CD4-positive, alpha-beta memory T cell (primary cell): ENCODE measurements at regions of chr20 and their contacts with region 1.

Region 1: DNA sequence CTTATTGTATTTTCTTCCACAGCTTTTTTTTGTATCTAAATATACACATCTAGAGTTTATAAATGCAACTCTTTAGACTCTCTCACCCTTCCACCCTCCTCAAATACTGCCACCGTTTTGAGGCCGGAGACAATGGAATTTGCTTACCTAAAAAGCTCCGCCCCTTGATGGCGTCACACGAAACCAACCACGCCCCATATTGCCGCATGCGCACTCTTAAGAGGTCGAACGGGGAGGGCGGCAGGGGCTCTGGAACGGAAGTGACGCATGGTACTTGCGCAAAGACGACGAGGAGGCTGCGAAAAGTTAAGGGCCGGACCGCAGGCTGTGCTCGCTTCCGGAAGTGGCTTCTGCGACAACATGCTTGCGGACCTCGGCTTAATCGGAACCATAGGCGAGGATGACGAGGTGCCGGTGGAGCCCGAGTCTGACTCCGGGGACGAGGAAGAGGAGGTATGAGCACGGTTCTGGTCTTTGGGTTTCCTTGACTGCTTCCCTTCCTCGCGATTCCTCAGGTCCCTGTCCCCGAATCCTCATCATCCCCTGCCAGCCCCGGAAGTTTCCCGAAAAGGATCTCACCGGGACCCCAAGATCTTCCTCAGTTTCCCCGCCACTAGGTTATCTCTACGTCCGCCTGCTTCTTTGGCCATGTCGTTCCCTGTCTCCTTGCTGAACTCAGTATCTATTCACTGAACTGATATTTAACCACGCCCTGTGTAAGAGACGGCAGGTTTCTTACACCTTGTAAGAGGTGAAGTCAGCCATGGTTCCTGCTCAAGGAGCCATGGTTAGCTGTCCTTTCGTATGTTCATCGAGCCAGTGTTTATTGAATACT is at the start of gene DDX27:
- DNase-seq: peak; percentile 97 to 98 (median 97)
- H3K4me3 ChIP-seq: peak within 1 kb of the TSS; percentile 83 to 87
- H3K4me3 Mint-ChIP-seq: peak within 1 kb of the TSS; percentile 90 to 100 (median 95)
- H3K27ac ChIP-seq: peak within 1 kb of the TSS; percentile 94
- H3K27ac Mint-ChIP-seq: peak within 1 kb of the TSS; percentile 85 to 100 (median 99)
- H3K4me1 ChIP-seq: peaks cover 30% of the 10 kb centered on the region
- H3K4me1 Mint-ChIP-seq: peaks cover 18 to 39% (median 26%) of the 10 kb centered on the region in 4 donors
- H3K27me3 ChIP-seq: no peaks in the 10 kb centered on the region
- H3K27me3 Mint-ChIP-seq: no peaks in the 10 kb centered on the region
- total RNA-seq, gene DDX27: 60.3 to 60.4 TPM

Region 2: DNA sequence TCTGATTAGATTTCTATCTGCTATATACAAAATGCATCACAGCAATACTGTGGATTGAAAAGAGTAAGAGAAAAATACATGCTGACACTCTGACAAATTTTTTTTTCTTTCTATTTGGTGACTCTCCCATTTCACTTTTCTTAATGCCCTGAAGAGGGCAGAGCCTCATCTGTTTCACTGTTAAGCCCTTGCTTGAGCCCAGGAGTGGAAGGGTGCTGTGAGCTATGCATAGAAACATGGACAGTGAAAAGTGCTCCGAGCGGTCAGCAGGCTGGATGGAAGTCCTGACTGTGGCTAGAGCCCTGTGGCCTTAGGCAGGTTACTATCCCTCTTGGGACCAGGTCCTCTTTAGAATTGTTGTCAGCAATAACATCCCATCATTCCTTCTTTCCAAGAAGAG is 190.6 kb before region 1 on chr20:
- CTCF ChIA-PET with region 1: interaction called, 3 read pairs
- POLR2A ChIA-PET with region 1: no interaction called
- intact Hi-C with region 1: loop called (anchors 2 kb)
- DNase-seq: no peak
- H3K4me3 ChIP-seq: no peak overlapping the region
- H3K4me3 Mint-ChIP-seq: no peak overlapping the region
- H3K27ac ChIP-seq: no peak overlapping the region
- H3K27ac Mint-ChIP-seq: no peak overlapping the region
- H3K4me1 ChIP-seq: no peaks in the 10 kb centered on the region
- H3K4me1 Mint-ChIP-seq: no peaks in the 10 kb centered on the region
- H3K27me3 ChIP-seq: no peaks in the 10 kb centered on the region
- H3K27me3 Mint-ChIP-seq: no peaks in the 10 kb centered on the region

Region 3: GRCh38 chr20:49046087-49046900 is 173.0 kb before region 1 on chr20 and contains the start of gene CSE1L:
- CTCF ChIA-PET with region 1: interaction called, 6 read pairs
- POLR2A ChIA-PET with region 1: interaction called, 5 read pairs
- intact Hi-C with region 1: loop called (anchors 2 kb)
- DNase-seq: peak; percentile 93 to 97 (median 94)
- H3K4me3 ChIP-seq: peak within 1 kb of the TSS; percentile 99 to 100
- H3K4me3 Mint-ChIP-seq: peak within 1 kb of the TSS; percentile 97 to 99 (median 98)
- H3K27ac ChIP-seq: peak within 1 kb of the TSS; percentile 87
- H3K27ac Mint-ChIP-seq: peak within 1 kb of the TSS; percentile 98 to 99 (median 99)
- H3K4me1 ChIP-seq: peaks cover 40% of the 10 kb centered on the region
- H3K4me1 Mint-ChIP-seq: peaks cover 24 to 49% (median 38%) of the 10 kb centered on the region in 4 donors
- H3K27me3 ChIP-seq: no peaks in the 10 kb centered on the region
- H3K27me3 Mint-ChIP-seq: no peaks in the 10 kb centered on the region
- total RNA-seq, gene CSE1L: 44.5 to 45.8 TPM

Region 4: DNA sequence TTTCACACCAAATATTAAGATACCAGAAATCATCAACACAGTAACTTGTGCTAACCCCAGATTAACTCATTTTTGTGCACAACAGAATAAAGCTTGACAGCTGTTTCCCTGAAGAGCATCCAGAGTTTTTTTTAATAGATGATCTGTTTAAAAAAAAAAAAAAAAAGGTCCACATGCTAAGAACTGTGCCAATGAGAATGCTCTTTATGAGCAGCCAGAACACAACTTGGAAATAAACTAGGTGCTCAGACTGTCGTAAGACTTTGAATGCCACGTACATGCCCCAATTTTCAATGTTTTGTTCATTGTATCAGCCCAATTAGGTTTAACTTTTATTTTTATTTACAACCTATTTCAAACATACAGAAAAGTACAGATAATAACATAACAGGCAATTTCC is 78.5 kb before region 1 on chr20:
- CTCF ChIA-PET with region 1: interaction called, 237 read pairs
- POLR2A ChIA-PET with region 1: no interaction called
- intact Hi-C with region 1: no loop called
- DNase-seq: no peak
- H3K4me3 ChIP-seq: no peak overlapping the region
- H3K4me3 Mint-ChIP-seq: no peak overlapping the region
- H3K27ac ChIP-seq: no peak overlapping the region
- H3K27ac Mint-ChIP-seq: peak overlapping the region; percentile 1 to 89 (median 55)
- H3K4me1 ChIP-seq: no peaks in the 10 kb centered on the region
- H3K4me1 Mint-ChIP-seq: peaks cover 11 to 26% (median 23%) of the 10 kb centered on the region in 4 donors
- H3K27me3 ChIP-seq: no peaks in the 10 kb centered on the region
- H3K27me3 Mint-ChIP-seq: no peaks in the 10 kb centered on the region

Region 5: GRCh38 chr20:49186535-49187329 is 32.6 kb before region 1 on chr20:
- CTCF ChIA-PET with region 1: interaction called, 41 read pairs
- POLR2A ChIA-PET with region 1: interaction called, 12 read pairs
- intact Hi-C with region 1: loop called (anchors 1 kb)
- DNase-seq: peak; percentile 60 to 83 (median 68)
- H3K4me3 ChIP-seq: peak overlapping the region; percentile 49 to 82
- H3K4me3 Mint-ChIP-seq: peak overlapping the region; percentile 84 to 96 (median 90)
- H3K27ac ChIP-seq: peak overlapping the region; percentile 75
- H3K27ac Mint-ChIP-seq: peak overlapping the region; percentile 77 to 95 (median 93)
- H3K4me1 ChIP-seq: peaks cover 50% of the 10 kb centered on the region
- H3K4me1 Mint-ChIP-seq: peaks cover 35 to 59% (median 47%) of the 10 kb centered on the region in 4 donors
- H3K27me3 ChIP-seq: no peaks in the 10 kb centered on the region
- H3K27me3 Mint-ChIP-seq: peaks cover 0 to 2% of the 10 kb centered on the region in 2 donors

Region 6: GRCh38 chr20:49207076-49207475 is 12.2 kb before region 1 on chr20:
- CTCF ChIA-PET with region 1: interaction called, 14 read pairs
- POLR2A ChIA-PET with region 1: no interaction called
- intact Hi-C with region 1: no loop called
- DNase-seq: no peak
- H3K4me3 ChIP-seq: no peak overlapping the region
- H3K4me3 Mint-ChIP-seq: no peak overlapping the region
- H3K27ac ChIP-seq: no peak overlapping the region
- H3K27ac Mint-ChIP-seq: no peak overlapping the region
- H3K4me1 ChIP-seq: no peaks in the 10 kb centered on the region
- H3K4me1 Mint-ChIP-seq: no peaks in the 10 kb centered on the region
- H3K27me3 ChIP-seq: no peaks in the 10 kb centered on the region
- H3K27me3 Mint-ChIP-seq: no peaks in the 10 kb centered on the region

Region 7: DNA sequence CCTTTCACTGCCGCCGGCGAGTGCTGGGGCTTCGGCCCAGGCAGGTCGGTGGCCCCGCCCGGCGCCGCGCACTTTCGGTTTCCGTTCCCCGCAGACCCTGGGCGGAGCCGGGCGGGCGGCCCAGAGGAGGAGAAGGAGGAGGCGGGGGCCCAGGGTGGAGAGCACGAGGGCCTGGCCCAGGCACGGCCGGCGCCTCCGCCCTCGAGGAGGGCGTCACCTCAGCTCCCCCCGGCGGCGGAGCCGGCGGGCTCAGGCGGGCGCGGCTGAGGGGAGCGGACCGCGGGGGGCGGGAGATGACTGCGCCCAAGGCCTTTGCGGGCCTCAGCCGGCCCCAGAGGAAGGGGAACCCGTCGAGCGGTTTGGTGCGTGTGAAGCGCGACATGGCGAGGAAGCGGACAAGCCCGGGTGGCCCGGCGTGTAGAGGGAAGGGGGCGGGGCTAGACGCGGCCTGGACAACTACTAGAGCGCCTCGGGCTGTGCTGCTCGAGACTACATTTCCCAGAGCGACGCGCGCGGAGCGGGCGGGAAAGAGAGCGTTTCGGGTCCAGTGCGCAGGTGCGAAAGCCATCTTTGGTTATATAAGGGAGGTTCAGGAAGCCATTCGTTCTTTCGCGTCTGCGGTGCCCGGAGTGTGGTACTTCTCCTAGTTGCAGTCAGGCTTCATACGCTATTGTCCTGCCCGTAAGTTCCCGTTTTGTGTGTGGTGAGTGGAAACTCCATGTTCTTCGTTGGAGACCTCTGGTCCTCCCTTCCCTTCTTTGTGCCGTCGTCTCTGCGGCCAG is 58.9 kb after region 1 on chr20 and contains the start of gene ZNFX1:
- CTCF ChIA-PET with region 1: interaction called, 6 read pairs
- POLR2A ChIA-PET with region 1: interaction called, 12 read pairs
- intact Hi-C with region 1: loop called (anchors 1 kb)
- DNase-seq: peak; percentile 99
- H3K4me3 ChIP-seq: peak within 1 kb of the TSS; percentile 86 to 92
- H3K4me3 Mint-ChIP-seq: peak within 1 kb of the TSS; percentile 93 to 99 (median 96)
- H3K27ac ChIP-seq: peak within 1 kb of the TSS; percentile 82
- H3K27ac Mint-ChIP-seq: peak within 1 kb of the TSS; percentile 96 to 99 (median 98)
- H3K4me1 ChIP-seq: peaks cover 70% of the 10 kb centered on the region
- H3K4me1 Mint-ChIP-seq: peaks cover 50 to 83% (median 63%) of the 10 kb centered on the region in 4 donors
- H3K27me3 ChIP-seq: no peaks in the 10 kb centered on the region
- H3K27me3 Mint-ChIP-seq: peaks cover 0 to 1% of the 10 kb centered on the region in 2 donors
- total RNA-seq, gene ZNFX1: 73.8 to 78.4 TPM